Activated CD4-positive, alpha-beta memory T cell treated with anti-CD3 and anti-CD28 coated beads, Interleukin-2, amount 10 ng/mL, durations not matched to agents 7 days and 5 days (primary cell): ENCODE measurements at regions of chr16 and their contacts with region 1.

Region 1: DNA sequence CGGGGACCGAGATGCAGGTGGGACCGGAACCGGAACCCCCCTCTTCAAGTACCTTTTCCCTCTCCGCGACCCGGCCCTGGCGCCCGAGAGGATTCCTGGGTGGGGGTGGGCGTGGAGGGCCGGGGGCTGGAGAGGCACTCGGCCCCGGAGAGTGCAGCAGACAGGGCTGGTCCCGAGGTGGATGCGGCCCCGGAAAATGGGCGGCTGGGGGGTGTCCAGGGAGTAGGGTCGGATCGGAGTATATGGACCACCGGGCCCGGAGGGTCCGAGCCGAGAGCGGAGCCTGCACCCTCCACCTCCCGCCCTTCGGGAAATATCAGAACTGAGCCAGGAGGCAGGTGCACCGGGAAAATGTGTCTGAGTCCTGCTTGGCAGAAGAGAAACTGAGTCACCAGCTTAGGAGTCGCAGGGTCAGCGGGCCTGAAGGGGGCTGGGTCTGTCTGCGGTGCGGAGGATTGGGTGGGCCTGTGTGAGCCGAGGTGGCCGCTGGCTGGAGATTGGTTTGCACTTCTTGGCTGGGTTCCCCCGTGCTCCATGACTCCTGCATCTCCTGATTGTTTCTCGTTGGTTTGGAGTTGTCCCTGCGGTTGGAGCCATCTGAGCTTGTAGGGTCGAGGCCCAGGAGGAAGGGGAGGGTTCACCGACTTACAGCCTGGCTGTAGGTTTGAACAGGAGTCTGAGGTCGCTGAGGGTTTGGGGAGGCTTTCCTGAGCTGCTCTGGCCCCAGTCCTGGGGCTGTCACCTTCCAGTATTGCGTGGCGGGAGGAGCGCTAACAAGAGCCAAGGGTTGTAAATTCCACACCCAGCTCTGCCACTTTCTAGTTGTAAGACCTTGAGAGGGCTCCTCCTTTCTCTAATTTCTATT is 518 bp downstream of the SH2B1 start:
- DNase-seq: peak; percentile 26
- H3K4me3 Mint-ChIP-seq: peak overlapping the region; percentile 87
- H3K27ac Mint-ChIP-seq: peak overlapping the region; percentile 90
- H3K4me1 Mint-ChIP-seq: peaks cover 35% of the 10 kb centered on the region
- H3K27me3 Mint-ChIP-seq: no peaks in the 10 kb centered on the region

Region 2: GRCh38 chr16:28846080-28846932 is 17.9 kb before region 1 on chr16 and contains the start of gene TUFM:
- CTCF ChIA-PET with region 1: interaction called, 45 read pairs
- POLR2A ChIA-PET with region 1: interaction called, 136 read pairs
- DNase-seq: peak; percentile 99
- H3K4me3 Mint-ChIP-seq: peak within 1 kb of the TSS; percentile 94
- H3K27ac Mint-ChIP-seq: peak within 1 kb of the TSS; percentile 91
- H3K4me1 Mint-ChIP-seq: peaks cover 32% of the 10 kb centered on the region
- H3K27me3 Mint-ChIP-seq: no peaks in the 10 kb centered on the region
- total RNA-seq, gene TUFM: 107 TPM

Region 3: DNA sequence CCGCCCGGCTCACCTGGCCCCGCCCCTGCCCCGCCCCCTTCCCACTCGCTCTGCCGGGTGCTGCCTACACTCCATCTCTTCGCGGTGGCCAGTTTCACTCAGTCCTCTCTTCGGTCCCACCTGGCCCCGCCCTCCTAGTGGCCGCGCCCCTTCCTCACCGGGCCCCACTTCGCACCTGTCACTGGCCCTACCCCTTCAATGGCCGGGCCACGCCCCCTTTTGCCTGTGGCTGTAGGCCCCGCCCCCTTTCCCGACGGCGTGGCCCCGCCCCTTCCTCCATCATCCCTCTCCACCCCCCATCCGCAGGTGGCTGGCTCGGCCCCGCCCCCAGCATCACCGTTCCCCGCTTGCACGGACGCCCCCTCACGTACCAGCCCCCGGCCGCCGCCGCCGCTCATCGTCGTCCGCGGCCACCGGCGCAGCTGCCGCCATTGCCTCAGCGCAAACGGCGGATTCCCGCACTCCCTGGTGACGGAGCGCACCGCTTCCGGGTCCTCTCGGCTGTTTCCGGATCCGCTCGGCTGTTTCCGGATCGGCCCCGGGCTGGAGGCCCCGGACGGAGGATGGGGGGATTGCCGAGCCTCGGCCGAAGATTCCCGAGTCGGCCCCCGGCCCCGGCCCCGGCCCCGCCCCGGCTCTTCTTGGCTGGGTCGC is 60.7 kb after region 1 on chr16 and contains the start of gene RABEP2:
- CTCF ChIA-PET with region 1: no interaction called
- POLR2A ChIA-PET with region 1: interaction called, 14 read pairs
- DNase-seq: peak; percentile 95
- H3K4me3 Mint-ChIP-seq: peak within 1 kb of the TSS; percentile 97
- H3K27ac Mint-ChIP-seq: peak within 1 kb of the TSS; percentile 95
- H3K4me1 Mint-ChIP-seq: peaks cover 20% of the 10 kb centered on the region
- H3K27me3 Mint-ChIP-seq: no peaks in the 10 kb centered on the region
- total RNA-seq, gene RABEP2: 15.7 to 16.5 TPM

Region 4: DNA sequence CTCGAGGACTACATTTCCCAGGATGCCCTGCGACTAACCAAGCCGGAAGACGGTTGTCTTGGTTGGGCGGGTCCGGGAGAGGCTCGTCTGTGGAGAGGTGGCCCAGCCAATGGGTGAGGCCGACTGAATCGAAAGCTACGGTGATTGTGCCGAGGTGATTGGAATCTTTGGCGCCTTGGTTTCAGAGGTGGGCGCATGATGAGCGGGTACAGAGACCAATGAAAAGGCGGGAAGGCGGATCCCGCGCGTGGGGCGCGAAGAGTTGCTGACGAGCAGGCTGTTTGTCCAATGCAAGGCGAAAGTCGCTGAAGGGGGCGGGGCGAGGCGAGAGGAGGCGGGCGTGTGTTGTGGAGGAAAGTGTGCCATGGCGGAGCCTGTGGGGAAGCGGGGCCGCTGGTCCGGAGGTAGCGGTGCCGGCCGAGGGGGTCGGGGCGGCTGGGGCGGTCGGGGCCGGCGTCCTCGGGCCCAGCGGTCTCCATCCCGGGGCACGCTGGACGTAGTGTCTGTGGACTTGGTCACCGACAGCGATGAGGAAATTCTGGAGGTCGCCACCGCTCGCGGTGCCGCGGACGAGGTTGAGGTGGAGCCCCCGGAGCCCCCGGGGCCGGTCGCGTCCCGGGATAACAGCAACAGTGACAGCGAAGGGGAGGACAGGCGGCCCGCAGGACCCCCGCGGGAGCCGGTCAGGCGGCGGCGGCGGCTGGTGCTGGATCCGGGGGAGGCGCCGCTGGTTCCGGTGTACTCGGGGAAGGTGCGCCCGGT is 86.7 kb after region 1 on chr16 and contains the start of gene NFATC2IP:
- CTCF ChIA-PET with region 1: interaction called, 26 read pairs
- POLR2A ChIA-PET with region 1: interaction called, 14 read pairs
- DNase-seq: peak; percentile 100
- H3K4me3 Mint-ChIP-seq: peak within 1 kb of the TSS; percentile 88
- H3K27ac Mint-ChIP-seq: peak within 1 kb of the TSS; percentile 88
- H3K4me1 Mint-ChIP-seq: peaks cover 37% of the 10 kb centered on the region
- H3K27me3 Mint-ChIP-seq: no peaks in the 10 kb centered on the region
- total RNA-seq, gene NFATC2IP: 96.7 TPM